ENCODE measurements at regions of chr2 and their contacts with region 1.

Region 1: DNA sequence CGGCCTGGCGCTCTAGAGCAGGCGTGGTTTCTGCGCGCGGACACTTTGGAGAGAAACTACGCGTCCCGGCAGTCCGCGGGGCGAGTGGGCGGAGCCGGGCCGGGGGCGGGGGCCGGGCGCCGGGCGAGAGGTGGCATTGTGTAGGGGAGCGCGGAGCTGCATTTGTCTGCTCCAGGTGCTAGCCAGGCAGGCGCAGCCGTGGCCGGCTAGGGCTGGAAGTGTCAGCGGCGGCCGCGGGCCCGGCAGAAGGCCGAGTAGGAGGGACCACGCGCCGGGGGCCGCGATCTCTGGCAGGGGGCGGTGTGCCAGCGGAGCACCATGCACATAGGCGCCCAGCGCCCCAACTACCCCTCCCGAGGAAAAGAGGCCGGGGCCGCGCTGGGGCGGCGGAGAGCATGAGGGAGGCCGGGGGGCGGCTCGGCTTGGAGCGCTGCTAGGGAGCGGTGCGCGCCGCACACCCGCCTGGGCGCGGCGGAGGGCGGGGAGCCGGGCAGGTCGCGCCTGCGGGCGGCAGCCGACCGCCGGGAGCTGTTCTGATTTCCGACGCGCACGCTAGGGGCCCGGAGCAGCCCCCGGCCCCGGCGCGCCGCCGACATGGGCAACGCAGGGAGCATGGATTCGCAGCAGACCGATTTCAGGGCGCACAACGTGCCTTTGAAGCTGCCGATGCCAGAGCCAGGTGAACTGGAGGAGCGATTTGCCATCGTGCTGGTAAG is at the start of gene FMNL2:
- DNase-seq: peak; percentile 77 to 95 (median 90)

Region 2: DNA sequence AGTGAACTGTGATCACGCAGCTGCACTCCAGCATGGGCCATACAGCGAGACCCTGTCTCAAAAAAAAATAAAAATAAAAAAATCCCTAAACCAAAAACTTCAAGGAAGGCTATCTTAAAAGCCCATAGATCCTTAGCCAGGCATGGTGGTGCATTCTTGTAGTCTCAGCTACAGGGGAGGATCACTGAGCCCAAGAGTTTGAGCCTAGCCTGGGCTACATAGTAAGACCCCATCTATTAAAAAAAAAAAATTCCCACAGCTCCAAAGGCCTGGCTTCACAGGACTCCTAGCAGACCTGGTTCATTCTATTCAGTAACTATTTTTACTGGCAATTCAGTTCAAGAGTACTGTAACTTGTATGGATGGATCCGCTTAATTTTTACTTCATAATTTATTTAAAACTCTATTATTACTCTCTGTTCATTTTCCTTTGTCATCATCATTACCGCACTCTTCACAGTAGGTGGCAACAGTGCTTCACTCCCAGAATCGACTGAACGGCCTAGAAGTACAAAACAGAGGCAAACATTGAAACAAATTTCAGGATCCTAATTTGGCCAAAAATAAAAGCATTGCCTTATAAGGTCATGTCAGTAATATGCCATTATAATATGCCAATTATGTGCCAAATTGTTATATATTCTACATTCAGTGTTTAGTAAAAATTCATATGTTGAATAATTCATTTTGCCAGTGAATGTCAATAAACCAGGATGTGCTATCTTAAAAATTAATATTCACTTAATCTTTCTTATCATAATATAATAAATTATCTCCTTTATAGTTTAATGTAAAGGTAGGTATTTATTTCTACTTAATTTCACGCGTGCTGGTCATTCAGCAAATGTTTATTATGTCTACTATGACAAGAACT is 145.3 kb before region 1 on chr2:
- intact Hi-C with region 1: loop called (anchors 10 kb)
- DNase-seq: peak in 36 of 42 donors; percentile 9 to 80 (median 60)

Region 3: DNA sequence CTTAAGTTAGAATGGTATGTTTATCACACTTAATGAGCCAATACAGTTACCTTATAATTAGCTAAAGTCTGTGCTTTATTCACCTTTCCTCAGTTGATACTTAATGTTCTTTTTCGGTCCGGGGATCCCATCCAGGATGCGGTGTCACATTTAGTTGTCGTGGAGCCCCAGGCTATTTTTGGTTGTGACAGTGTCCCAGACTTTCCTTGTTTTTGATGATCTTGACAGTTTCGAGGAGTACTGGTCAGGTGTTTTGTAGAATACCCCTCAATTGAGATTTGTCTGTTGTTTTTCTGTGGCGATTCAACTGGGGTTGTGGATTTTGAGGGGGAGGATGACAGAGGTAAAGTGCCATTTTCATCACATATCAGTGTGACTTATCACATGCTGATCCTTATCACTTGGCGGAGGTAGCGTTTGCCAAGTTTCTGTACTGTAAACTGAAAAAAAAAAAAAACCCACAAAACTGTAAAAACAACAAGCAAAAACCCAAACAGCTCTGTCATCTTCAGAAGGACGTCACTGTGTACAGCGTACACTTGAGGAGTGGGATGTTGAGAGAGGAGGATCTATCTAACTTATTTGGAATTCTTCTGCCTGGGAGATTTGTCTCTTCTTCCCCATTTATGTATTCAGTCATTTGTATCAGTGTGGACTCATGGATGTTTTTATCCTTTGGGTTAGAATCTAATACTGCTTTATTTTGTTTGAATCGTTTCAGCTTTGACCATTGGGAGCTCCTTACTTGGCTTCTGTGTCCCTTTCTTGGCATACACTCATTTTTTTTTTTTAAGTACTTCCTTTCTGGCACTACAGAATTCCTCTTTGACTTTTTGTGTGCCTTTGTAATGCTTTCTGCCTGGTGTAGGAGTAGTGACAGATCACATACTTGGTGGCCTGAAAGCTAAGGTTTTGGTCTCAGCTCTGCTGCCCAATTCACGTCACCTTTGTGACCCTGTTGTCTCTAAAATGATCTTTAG is 67.9 kb after region 1 on chr2:
- intact Hi-C with region 1: loop called (anchors 5 kb)
- DNase-seq: peak in 1 of 42 donors; percentile 34

Region 4: DNA sequence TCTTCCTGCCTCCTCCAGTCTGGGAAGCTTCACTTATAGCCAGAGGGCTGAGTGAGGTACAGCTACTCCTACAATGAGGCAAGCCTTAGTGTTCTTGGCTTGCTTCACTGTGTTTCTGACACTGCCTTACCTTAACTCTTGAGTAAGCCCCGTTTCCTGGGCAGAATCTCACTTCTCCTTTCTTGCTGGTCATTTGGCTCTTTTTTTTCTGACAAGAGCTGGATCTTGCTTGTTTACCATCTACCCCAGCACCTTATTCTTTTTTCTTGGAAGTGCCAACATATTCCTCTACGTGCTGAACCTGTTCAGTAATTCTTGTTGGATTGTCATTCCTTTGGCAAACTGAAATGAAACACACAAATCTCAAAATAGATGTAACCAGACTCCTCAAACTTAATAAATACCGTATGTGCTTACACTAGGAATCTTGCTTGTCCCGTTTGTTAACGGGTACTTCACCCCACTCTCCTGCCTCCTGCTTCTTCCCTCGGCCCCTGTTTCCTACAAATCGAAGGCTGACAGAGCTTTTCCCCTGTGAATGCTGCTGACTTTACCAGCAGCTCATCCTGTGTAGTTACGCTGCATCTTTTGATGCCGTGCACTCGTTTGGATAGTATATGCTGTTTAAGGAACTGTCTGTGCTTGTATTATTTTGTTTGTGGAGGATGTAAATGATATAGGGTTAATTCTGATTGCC is 132.0 kb after region 1 on chr2:
- intact Hi-C with region 1: loop called (anchors 10 kb)
- DNase-seq: peak in 1 of 42 donors; percentile 62

Region 5: GRCh38 chr2:152627351-152627957 is 292.3 kb after region 1 on chr2:
- intact Hi-C with region 1: loop called (anchors 5 kb)
- DNase-seq: peak in 1 of 42 donors; percentile 62

Region 6: GRCh38 chr2:152717228-152718075 is 382.3 kb after region 1 on chr2 and contains the start of gene PRPF40A:
- intact Hi-C with region 1: loop called (anchors 5 kb)
- DNase-seq: peak; percentile 98 to 100 (median 100)

Measured in head of caudate nucleus (tissue), 42 donors.